Gastrocnemius medialis (tissue), 4 donors: ENCODE measurements at regions of chr14 and their contacts with region 1.

Region 1: DNA sequence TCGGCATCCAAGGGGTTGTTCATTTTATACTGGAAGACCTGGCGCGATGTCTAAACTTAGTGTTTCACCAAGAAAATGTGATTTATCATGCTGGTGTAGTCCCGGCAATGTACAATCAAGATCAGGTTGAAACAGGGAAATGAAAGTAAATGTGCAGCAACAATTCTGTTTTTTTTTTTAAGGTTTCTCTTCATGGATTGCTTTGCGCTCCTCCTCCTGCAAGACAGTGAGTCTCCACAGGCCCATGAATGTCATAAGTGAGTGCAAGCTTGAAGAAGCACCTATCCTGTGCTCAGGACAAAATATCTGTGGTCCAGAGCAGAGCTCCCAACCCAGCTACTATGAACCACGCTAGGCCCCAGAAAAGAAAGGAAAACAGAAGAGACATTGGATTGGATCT is 143.4 kb downstream of the KCNK10 start:
- DNase-seq: no peak
- ATAC-seq: no peak
- H3K4me3 ChIP-seq: no peak overlapping the region
- H3K27ac ChIP-seq: no peak overlapping the region
- H3K4me1 ChIP-seq: no peaks in the 10 kb centered on the region
- H3K27me3 ChIP-seq: no peaks in the 10 kb centered on the region
- CTCF ChIP-seq: no peak
- POLR2A ChIP-seq: no peak

Region 2: GRCh38 chr14:87944987-87945604 is 234.6 kb before region 1 on chr14:
- in situ Hi-C with region 1: loop called in 1 of 4 experiments (anchors 10 kb)
- intact Hi-C with region 1: no loop called
- DNase-seq: no peak
- ATAC-seq: peak in 1 of 2 donors; percentile 55
- H3K4me3 ChIP-seq: no peak overlapping the region
- H3K27ac ChIP-seq: no peak overlapping the region
- H3K4me1 ChIP-seq: no peaks in the 10 kb centered on the region
- H3K27me3 ChIP-seq: no peaks in the 10 kb centered on the region
- CTCF ChIP-seq: peak; percentile 46 to 65 (median 52)
- POLR2A ChIP-seq: no peak

Region 3: GRCh38 chr14:87979689-87980088 is 200.0 kb before region 1 on chr14:
- in situ Hi-C with region 1: no loop called
- intact Hi-C with region 1: no loop called
- DNase-seq: no peak
- ATAC-seq: no peak
- H3K4me3 ChIP-seq: no peak overlapping the region
- H3K27ac ChIP-seq: no peak overlapping the region
- H3K4me1 ChIP-seq: no peaks in the 10 kb centered on the region
- H3K27me3 ChIP-seq: no peaks in the 10 kb centered on the region
- CTCF ChIP-seq: no peak
- POLR2A ChIP-seq: no peak